K562 (cell line): ENCODE measurements at regions of chr11 and their contacts with region 1.

Region 1: GRCh38 chr11:31419669-31420068 is 50.0 kb downstream of the DNAJC24 start:
- DNase-seq: no peak
- ATAC-seq: peak; percentile 45
- H3K4me3 ChIP-seq: no peak overlapping the region
- H3K27ac ChIP-seq: peak overlapping the region; percentile 0; the same call in 1 of the 3 replicates
- H3K4me1 ChIP-seq: peaks cover 0 to 15% of the 10 kb centered on the region in 2 experiments; a peak in 3 of 5 replicates
- H3K27me3 ChIP-seq: no peaks in the 10 kb centered on the region; a peak in 1 of 5 replicates
- CTCF ChIP-seq: no peak
- EP300 ChIP-seq: no peak
- POLR2A ChIP-seq: no peak
- RAD21 ChIP-seq: no peak

Region 2: GRCh38 chr11:31369348-31370329 is 50.0 kb before region 1 on chr11 and contains the starts of genes DCDC1 and DNAJC24:
- CTCF ChIA-PET with region 1: no interaction called
- POLR2A ChIA-PET with region 1: no interaction called
- in situ Hi-C with region 1: no loop called
- intact Hi-C with region 1: loop called (anchors 5 kb)
- DNase-seq: peak; percentile 85 to 96 (median 86)
- ATAC-seq: peak; percentile 99
- H3K4me3 ChIP-seq: peak within 1 kb of the TSS; percentile 62
- H3K27ac ChIP-seq: peak within 1 kb of the TSS; percentile 58
- H3K4me1 ChIP-seq: no peaks in the 10 kb centered on the region
- H3K27me3 ChIP-seq: no peaks in the 10 kb centered on the region; a peak in 1 of 5 replicates
- CTCF ChIP-seq: no peak
- EP300 ChIP-seq: no peak
- POLR2A ChIP-seq: peak; percentile 91
- RAD21 ChIP-seq: no peak
- polyA plus RNA-seq, gene DCDC1: 0.06 TPM in 1 of 2 experiments, not detected in the other
- polyA plus RNA-seq, gene DNAJC24: 12.2 to 15.8 TPM

Region 3: GRCh38 chr11:31529701-31530100 is 110.0 kb after region 1 on chr11:
- CTCF ChIA-PET with region 1: no interaction called
- POLR2A ChIA-PET with region 1: no interaction called
- in situ Hi-C with region 1: no loop called
- intact Hi-C with region 1: no loop called
- DNase-seq: no peak
- ATAC-seq: no peak
- H3K4me3 ChIP-seq: no peak overlapping the region
- H3K27ac ChIP-seq: no peak overlapping the region
- H3K4me1 ChIP-seq: no peaks in the 10 kb centered on the region
- H3K27me3 ChIP-seq: no peaks in the 10 kb centered on the region
- CTCF ChIP-seq: no peak
- EP300 ChIP-seq: no peak
- POLR2A ChIP-seq: no peak
- RAD21 ChIP-seq: no peak